ENCODE measurements at regions of chr1 and their contacts with region 1.

Region 1: DNA sequence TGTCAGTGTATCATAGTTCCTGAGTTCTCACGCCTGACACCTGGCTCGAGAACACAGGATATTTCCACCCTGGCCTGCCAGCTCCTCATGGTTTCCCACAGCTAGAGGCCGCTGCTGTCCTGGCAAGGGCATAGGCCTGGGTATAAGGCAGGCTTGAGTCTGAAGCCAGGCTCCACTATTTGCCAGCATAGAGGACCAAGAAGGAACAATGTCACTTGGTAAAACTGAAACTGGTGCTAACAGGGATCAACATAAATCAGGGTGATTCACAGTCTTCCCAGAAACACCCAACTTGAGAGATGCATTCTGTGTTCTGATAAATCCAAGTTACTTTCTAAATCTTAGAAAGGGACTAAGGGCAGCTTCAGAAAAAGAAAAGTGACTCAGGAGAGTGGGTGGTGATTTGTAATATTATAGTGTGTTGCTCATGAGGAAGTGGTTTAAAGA is 6.9 kb upstream of the S100A2 start:
- DNase-seq: peak; percentile 86

Region 2: GRCh38 chr1:153352523-153352922 is 220.1 kb before region 1 on chr1:
- intact Hi-C with region 1: loop called (anchors 5 kb)
- DNase-seq: no peak

Region 3: DNA sequence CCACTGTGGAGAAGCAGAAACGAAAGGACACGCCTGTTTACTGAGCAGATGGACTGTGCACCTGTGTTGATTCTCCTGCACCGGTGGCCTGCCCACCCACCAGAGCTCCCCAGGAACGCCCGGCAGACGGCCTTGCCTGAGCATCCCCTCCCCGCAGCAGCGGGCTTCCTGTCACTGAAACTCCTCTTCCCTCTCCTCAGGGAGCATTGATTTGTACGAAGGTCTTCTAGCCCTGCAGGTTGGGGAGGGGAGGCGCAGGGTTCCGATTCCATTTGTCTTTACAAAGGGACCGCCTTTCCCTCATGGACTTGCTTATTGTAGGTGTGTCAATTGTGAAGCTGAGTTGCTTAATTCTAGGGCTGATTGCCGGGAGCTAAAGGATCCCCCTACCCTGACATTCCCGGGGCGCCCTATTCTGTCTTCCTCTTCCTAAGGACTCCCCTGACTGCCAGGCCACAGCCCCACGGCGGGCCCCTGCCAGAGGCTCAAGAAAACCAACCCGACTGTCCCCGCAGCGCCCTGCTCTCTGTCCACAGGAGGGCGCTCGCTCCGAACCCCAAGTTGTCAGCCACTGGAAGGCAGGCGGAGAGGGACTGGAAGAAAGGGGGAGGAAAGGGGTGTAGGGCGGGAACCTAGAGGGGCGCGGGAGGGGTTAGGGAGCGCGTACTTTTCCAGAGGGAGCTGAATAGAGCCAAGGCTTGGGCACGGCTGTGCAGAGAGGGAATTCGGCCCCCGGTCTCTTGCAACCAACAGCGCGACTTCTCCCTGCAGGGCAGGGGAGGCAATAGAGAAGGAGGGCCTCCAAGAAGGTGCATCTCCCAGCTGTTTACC is 39.6 kb before region 1 on chr1:
- intact Hi-C with region 1: loop called (anchors 1 kb)
- DNase-seq: peak; percentile 96

Region 4: GRCh38 chr1:153670859-153671627 is 98.5 kb after region 1 on chr1 and contains the start of gene ILF2:
- intact Hi-C with region 1: loop called (anchors 2 kb)
- DNase-seq: peak; percentile 96
- total RNA-seq, gene ILF2: 76.5 TPM

Region 5: DNA sequence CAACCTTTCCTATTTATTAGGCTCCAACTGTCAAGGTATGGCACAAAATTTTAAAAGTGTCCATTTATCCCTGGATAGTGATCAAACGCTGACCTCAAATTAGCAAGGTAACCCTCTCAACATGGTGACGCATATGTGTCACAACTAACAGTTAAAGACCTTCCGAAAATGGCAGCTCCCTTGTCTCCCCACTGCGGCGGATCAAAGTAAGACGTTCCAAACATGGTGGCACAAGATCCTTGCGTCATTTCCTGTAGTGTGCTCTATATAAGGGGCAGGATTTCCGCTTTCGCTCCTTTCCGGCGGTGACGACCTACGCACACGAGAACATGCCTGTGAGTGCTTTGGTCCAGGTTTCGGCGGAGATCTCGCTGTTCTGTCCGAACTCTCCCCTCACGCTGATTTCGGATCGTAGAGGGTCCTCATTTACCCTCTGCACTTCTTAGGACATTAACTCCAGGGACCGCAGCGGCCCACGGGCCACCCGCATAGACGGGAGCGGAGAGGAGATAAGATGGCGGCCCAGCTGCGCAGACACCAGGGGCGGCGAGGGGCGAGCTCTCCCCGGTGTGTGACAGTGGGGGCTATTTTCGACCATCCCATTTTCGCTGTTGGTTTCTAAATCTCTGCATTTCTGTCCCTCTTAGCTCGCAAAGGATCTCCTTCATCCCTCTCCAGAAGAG is 418.0 kb after region 1 on chr1 and contains the start of gene RPS27:
- intact Hi-C with region 1: loop called (anchors 5 kb)
- DNase-seq: peak; percentile 90
- total RNA-seq, gene RPS27: 712 TPM

Measured in cardiac septum (tissue), 1 donor.